MCF 10A (cell line): ENCODE measurements at regions of chr13 and their contacts with region 1.

Region 1: GRCh38 chr13:30114571-30115256 is 192.6 kb downstream of the KATNAL1 start:
- DNase-seq: peak; percentile 83
- H3K4me3 Mint-ChIP-seq: peak overlapping the region; percentile 72
- H3K27ac Mint-ChIP-seq: no peak overlapping the region
- H3K4me1 Mint-ChIP-seq: peaks cover 24% of the 10 kb centered on the region
- H3K27me3 Mint-ChIP-seq: no peaks in the 10 kb centered on the region
- CTCF ChIP-seq: peak; percentile 90

Region 2: DNA sequence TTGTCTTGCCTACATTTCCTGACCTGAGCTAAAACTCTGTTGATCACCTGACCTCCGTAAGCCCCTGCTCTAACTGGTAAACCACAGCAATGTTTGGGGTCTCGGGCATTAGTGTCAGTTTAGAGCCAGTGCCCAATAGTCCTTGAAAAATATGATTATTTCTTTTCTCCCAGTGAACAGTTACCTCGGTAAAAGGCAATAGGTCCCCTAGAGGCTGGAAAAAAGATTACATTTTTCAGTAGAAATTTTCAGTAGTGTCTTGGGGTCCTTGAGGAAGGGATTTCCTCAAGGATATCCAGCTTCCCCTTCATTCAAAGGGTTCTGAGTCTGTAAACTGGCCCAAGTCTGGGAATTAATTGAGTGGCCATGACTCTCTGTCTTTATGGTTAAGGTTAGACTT is 696.7 kb before region 1 on chr13:
- CTCF ChIA-PET with region 1: no interaction called
- POLR2A ChIA-PET with region 1: no interaction called
- intact Hi-C with region 1: no loop called
- DNase-seq: no peak
- H3K4me3 Mint-ChIP-seq: no peak overlapping the region
- H3K27ac Mint-ChIP-seq: no peak overlapping the region
- H3K4me1 Mint-ChIP-seq: no peaks in the 10 kb centered on the region
- H3K27me3 Mint-ChIP-seq: peaks cover 23% of the 10 kb centered on the region
- CTCF ChIP-seq: no peak

Region 3: GRCh38 chr13:29532116-29532515 is 582.6 kb before region 1 on chr13:
- CTCF ChIA-PET with region 1: no interaction called
- POLR2A ChIA-PET with region 1: no interaction called
- intact Hi-C with region 1: no loop called
- DNase-seq: no peak
- H3K4me3 Mint-ChIP-seq: no peak overlapping the region
- H3K27ac Mint-ChIP-seq: no peak overlapping the region
- H3K4me1 Mint-ChIP-seq: no peaks in the 10 kb centered on the region
- H3K27me3 Mint-ChIP-seq: no peaks in the 10 kb centered on the region
- CTCF ChIP-seq: no peak

Region 4: DNA sequence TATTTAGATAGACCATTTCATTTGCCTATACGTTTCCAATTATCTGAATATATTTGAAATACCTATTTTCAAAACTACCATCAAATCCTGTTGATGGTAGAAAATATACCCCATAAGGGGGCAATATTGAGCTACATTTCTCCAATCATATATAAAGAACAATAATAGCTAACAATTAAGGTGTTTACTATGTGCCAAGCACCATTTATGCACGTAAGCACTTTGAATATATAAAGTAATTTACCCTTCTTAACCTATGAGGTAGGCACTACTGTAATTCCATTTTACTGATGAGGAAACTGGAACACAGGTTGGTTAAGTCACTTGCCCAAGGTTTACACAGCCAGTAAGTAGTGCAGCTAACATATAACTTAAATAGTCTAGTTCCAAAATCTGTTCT is 343.5 kb before region 1 on chr13:
- CTCF ChIA-PET with region 1: interaction called, 106 read pairs
- POLR2A ChIA-PET with region 1: interaction called, 32 read pairs
- intact Hi-C with region 1: loop called (anchors 1 kb)
- DNase-seq: peak; percentile 45
- H3K4me3 Mint-ChIP-seq: no peak overlapping the region
- H3K27ac Mint-ChIP-seq: no peak overlapping the region
- H3K4me1 Mint-ChIP-seq: no peaks in the 10 kb centered on the region
- H3K27me3 Mint-ChIP-seq: no peaks in the 10 kb centered on the region
- CTCF ChIP-seq: peak; percentile 43

Region 5: DNA sequence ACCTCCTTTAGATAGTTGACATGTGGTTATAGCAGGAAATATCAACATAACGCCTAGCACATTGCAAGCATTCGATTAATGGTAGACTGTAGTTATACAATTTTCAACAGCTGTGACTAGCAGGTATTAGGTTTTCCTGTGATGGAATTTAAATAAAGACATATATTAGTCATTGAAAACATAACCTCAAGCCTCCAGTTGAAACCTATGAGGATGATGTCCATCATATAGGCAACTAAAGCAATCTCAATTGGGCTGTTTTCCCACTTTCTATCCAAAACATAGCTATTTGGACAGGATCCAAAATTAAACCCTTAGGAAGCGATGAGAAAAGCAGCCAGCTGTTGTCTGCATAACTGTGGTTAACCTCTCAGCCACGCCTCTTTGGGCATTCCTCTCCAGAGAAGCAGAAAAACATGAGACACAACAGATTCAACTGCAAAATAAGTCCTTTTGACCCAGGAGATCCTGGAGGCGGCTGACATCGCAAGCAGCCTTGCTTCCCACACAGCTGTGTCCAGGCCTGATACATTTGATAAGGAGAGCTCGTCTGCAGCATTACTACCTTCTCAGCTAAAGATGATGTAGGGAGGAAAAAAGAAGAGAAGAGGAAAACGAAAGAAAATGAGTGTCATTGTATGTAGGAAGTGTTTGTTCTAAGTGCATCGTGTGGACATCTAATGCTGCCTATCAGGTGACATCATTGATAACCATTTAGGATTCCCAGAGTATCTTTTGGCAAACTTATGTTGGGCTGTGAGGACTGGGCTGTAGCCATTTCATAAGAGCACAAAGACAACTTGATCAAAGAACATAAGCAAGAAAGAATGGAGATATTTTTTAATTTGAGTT is 212.4 kb before region 1 on chr13:
- CTCF ChIA-PET with region 1: interaction called, 13 read pairs
- POLR2A ChIA-PET with region 1: interaction called, 10 read pairs
- intact Hi-C with region 1: no loop called
- DNase-seq: peak; percentile 94
- H3K4me3 Mint-ChIP-seq: peak overlapping the region; percentile 59
- H3K27ac Mint-ChIP-seq: peak overlapping the region; percentile 90
- H3K4me1 Mint-ChIP-seq: peaks cover 30% of the 10 kb centered on the region
- H3K27me3 Mint-ChIP-seq: no peaks in the 10 kb centered on the region
- CTCF ChIP-seq: no peak

Region 6: DNA sequence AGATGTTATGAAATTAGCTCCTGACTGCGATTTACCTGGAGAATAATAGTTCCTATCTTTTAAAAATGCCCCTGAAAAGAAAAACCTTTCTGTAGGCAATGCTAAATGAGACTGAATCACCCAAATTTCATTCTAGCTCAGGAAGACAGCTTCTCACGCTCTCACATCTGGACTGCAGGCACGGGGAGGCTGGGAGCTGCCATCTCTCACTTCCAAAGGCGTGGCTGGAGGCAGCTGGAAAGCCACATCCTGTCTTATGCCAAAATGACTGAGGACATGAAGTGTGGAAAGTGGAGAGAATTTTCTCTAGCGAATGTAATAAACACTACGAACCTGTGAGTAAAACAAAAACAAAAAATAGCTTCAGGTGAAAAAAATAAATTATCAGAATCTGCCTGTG is 206.3 kb before region 1 on chr13:
- CTCF ChIA-PET with region 1: interaction called, 13 read pairs
- POLR2A ChIA-PET with region 1: interaction called, 10 read pairs
- intact Hi-C with region 1: no loop called
- DNase-seq: peak; percentile 75
- H3K4me3 Mint-ChIP-seq: peak overlapping the region; percentile 7
- H3K27ac Mint-ChIP-seq: peak overlapping the region; percentile 92
- H3K4me1 Mint-ChIP-seq: peaks cover 55% of the 10 kb centered on the region
- H3K27me3 Mint-ChIP-seq: no peaks in the 10 kb centered on the region
- CTCF ChIP-seq: no peak

Region 7: DNA sequence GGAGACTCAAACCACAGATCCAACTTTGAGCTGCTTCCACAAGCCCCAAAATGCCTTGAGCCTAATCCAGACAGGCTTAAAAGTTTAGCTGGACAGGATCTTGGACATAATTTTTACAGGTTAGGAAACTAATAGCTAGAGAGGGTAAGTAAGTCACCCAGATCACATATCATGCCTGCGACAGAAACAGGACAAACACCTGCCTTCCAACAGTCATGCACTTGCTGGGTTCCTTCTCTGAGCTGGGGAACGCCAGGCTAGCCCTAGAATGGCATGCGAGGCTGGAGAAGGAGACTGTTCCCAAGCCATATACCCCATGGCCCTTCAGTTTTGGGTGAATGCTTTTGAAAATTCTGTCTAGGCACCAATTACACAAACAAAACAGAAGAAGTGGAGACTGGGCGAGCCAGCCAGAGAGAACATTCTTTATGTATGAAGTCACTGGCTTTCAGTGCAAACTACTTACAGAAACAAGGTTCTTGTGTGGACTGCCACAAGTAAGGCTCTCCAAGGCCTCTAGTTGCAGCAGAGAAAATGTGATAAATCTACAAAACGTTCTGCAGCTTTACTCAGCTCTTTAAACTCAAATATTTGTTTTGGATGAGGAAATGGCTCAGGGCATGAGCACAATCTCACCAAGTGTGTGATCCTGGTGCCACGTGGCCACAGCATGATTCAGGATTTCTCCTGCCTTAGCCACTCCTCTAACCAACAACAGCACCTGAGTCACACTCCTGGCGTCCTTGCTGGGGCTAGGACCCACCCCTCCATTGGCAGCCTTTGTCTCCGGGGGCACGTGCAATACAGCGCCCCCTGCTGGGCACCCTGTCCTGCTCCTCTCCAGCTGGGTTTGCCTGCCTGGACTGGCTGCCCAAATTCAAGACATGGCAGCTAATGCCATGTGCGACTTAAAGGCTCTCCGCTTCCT is 190.9 kb before region 1 on chr13:
- CTCF ChIA-PET with region 1: interaction called, 84 read pairs
- POLR2A ChIA-PET with region 1: interaction called, 99 read pairs
- intact Hi-C with region 1: loop called (anchors 1 kb)
- DNase-seq: peak; percentile 97
- H3K4me3 Mint-ChIP-seq: peak overlapping the region; percentile 37
- H3K27ac Mint-ChIP-seq: peak overlapping the region; percentile 98
- H3K4me1 Mint-ChIP-seq: peaks cover 71% of the 10 kb centered on the region
- H3K27me3 Mint-ChIP-seq: no peaks in the 10 kb centered on the region
- CTCF ChIP-seq: peak; percentile 94

Region 8: DNA sequence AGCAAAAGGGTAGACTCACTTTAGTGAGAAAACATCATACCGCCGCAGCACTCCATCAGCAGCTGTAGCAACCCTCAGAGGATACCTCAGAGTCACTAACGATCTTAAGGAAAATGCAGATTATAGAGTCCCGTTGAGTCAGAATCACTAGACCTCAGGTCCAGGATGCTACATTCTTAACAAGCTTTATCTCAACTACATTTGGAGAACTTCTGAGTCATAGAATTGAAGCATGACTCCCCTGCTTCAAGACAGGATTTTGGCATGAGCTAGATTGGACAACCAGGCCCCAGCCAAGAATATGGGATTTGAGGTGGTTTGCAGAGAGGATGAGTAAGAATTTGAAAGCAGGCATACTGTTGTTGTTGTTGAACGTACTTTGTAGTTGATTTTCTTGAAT is 145.4 kb before region 1 on chr13:
- CTCF ChIA-PET with region 1: no interaction called
- POLR2A ChIA-PET with region 1: no interaction called
- intact Hi-C with region 1: no loop called
- DNase-seq: peak; percentile 14
- H3K4me3 Mint-ChIP-seq: no peak overlapping the region
- H3K27ac Mint-ChIP-seq: no peak overlapping the region
- H3K4me1 Mint-ChIP-seq: no peaks in the 10 kb centered on the region
- H3K27me3 Mint-ChIP-seq: no peaks in the 10 kb centered on the region
- CTCF ChIP-seq: no peak

Region 9: GRCh38 chr13:30020726-30021312 is 93.9 kb before region 1 on chr13:
- CTCF ChIA-PET with region 1: no interaction called
- POLR2A ChIA-PET with region 1: no interaction called
- intact Hi-C with region 1: no loop called
- DNase-seq: peak; percentile 22
- H3K4me3 Mint-ChIP-seq: no peak overlapping the region
- H3K27ac Mint-ChIP-seq: no peak overlapping the region
- H3K4me1 Mint-ChIP-seq: peaks cover 8% of the 10 kb centered on the region
- H3K27me3 Mint-ChIP-seq: no peaks in the 10 kb centered on the region
- CTCF ChIP-seq: no peak

Region 10: DNA sequence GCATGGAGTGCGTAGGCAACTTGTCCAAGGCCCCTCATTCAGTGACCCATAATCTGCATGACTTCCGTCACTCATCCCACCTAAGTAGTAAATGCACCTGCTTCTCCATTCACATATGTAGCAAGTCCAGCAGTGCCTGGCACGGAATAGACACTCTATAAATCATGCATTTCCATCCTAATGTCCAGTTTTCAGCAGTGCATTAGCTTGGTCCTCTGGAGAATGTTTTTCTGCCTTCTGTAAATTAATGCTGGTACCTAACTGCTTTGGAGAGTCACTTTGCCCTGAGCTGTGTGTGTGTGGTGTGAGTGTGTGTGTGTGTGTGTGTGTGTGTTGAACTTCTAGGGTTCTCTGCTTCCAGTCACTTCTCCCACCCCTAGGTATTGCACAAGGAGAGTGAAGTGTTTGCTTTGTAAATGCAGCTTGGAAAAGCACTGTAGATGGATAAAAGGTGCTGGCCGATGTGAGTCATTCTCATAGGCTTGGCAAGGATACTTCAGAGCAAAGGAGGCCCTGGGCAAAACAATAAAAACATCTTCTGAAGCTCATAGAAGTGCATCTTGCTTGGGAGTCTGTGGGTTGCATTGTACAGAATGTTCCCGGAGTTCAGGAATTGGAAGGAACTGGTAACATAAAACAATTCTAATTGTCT is 10.8 kb after region 1 on chr13:
- CTCF ChIA-PET with region 1: interaction called, 27 read pairs
- POLR2A ChIA-PET with region 1: interaction called, 4 read pairs
- intact Hi-C with region 1: no loop called
- DNase-seq: peak; percentile 95
- H3K4me3 Mint-ChIP-seq: peak overlapping the region; percentile 47
- H3K27ac Mint-ChIP-seq: peak overlapping the region; percentile 79
- H3K4me1 Mint-ChIP-seq: peaks cover 48% of the 10 kb centered on the region
- H3K27me3 Mint-ChIP-seq: no peaks in the 10 kb centered on the region
- CTCF ChIP-seq: no peak